MCF 10A (cell line): ENCODE measurements at regions of chr6 and their contacts with region 1.

Region 1: DNA sequence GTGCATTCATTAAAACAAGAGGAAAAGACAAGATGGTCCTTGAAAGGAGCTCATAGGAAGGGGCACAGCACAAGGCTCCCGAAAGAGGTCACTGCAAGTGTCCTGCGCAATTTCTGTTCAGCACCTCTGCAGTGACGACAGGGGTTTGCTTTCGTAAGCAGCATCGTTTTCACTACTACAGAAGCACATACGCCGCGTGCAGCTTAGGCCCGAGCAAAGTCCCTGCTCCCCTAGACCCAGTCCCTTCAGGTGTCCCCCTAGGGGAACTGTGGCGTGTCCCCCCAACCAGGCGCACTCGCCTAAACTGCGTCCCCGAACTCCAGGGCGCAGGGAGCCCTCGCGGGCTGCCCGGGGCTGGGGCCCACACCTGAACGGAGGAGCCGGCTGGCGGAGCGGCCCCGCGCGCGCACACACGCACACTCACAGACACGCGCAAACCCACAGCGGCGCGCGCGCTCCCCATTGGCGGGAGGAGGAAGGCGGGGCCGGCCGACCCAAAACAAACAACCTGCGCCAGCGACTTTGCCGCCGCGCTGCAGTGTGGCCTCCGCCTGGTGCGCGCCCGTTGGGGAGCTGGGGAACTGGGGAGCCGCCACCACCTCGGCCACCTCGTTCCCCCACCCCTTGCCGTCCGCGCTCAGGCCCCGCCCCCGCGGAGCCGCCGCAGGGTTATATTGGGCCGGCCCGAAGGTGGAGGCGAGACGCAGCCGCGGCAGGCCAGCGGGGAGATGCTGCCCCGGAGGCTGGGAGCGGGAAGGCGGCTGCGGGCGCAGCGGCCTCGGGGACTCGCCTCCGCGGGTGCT is at the start of gene FOXQ1:
- DNase-seq: peak; percentile 45
- H3K4me3 Mint-ChIP-seq: peak within 1 kb of the TSS; percentile 77
- H3K27ac Mint-ChIP-seq: peak within 1 kb of the TSS; percentile 70
- H3K4me1 Mint-ChIP-seq: peaks cover 10% of the 10 kb centered on the region
- H3K27me3 Mint-ChIP-seq: no peaks in the 10 kb centered on the region
- CTCF ChIP-seq: no peak
- total RNA-seq, gene FOXQ1: 5.6 and 6.9 TPM in 2 replicates

Region 2: GRCh38 chr6:1062786-1063545 is 248.6 kb before region 1 on chr6:
- CTCF ChIA-PET with region 1: no interaction called
- POLR2A ChIA-PET with region 1: interaction called, 11 read pairs
- intact Hi-C with region 1: no loop called
- DNase-seq: peak; percentile 14
- H3K4me3 Mint-ChIP-seq: no peak overlapping the region
- H3K27ac Mint-ChIP-seq: no peak overlapping the region
- H3K4me1 Mint-ChIP-seq: peaks cover 17% of the 10 kb centered on the region
- H3K27me3 Mint-ChIP-seq: no peaks in the 10 kb centered on the region
- CTCF ChIP-seq: no peak

Region 3: GRCh38 chr6:1103945-1104623 is 207.5 kb before region 1 on chr6:
- CTCF ChIA-PET with region 1: no interaction called
- POLR2A ChIA-PET with region 1: interaction called, 35 read pairs
- intact Hi-C with region 1: no loop called
- DNase-seq: no peak
- H3K4me3 Mint-ChIP-seq: no peak overlapping the region
- H3K27ac Mint-ChIP-seq: no peak overlapping the region
- H3K4me1 Mint-ChIP-seq: peaks cover 23% of the 10 kb centered on the region
- H3K27me3 Mint-ChIP-seq: no peaks in the 10 kb centered on the region
- CTCF ChIP-seq: no peak

Region 4: DNA sequence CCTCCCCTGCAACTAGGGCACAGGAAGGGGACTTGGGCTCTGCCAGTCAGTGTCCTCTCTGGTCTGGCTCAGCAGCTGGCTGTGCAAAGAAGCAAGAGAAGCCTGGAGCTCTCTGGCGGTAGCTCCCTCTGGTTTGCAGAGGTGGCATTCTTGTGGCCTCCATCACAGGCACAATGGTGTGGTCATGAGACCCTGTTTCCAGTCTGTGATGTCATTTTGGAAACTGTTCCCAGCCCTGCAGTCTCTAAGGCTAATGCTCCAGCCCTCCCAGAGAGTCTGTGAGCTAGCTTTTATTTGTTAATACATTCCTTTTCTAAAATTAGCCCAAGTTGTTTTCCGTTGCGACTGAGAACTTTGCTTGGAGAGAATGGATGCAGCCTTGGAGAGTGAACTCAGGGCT is 69.2 kb before region 1 on chr6:
- CTCF ChIA-PET with region 1: interaction called, 4 read pairs
- POLR2A ChIA-PET with region 1: interaction called, 13 read pairs
- intact Hi-C with region 1: no loop called
- DNase-seq: no peak
- H3K4me3 Mint-ChIP-seq: no peak overlapping the region
- H3K27ac Mint-ChIP-seq: no peak overlapping the region
- H3K4me1 Mint-ChIP-seq: no peaks in the 10 kb centered on the region
- H3K27me3 Mint-ChIP-seq: no peaks in the 10 kb centered on the region
- CTCF ChIP-seq: no peak

Region 5: GRCh38 chr6:1297746-1298145 is 13.9 kb before region 1 on chr6:
- CTCF ChIA-PET with region 1: interaction called, 3 read pairs
- POLR2A ChIA-PET with region 1: interaction called, 60 read pairs
- intact Hi-C with region 1: no loop called
- DNase-seq: no peak
- H3K4me3 Mint-ChIP-seq: no peak overlapping the region
- H3K27ac Mint-ChIP-seq: no peak overlapping the region
- H3K4me1 Mint-ChIP-seq: peaks cover 22% of the 10 kb centered on the region
- H3K27me3 Mint-ChIP-seq: no peaks in the 10 kb centered on the region
- CTCF ChIP-seq: no peak